GM13976 (cell line): ENCODE measurements at regions of chr9 and their contacts with region 1.

Region 1: DNA sequence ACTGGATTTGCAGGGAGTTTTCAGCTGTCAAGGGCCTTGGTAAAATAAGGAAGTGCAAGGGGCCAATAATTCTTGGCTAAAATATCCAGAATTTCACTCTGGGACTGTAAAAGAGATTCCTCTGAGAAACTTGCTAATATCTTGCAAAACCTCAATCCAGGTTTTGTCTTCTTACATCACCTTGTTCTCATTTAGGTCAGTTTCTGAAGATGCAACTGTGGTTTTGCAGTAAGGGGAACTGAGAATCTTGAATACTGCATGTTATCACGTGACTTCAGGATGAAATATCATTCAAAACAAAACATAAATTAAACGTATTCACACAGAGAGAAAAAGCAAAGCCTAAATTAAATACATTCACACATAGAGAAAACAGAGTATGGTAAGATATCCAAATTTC is 35.0 kb upstream of the RIC1 start:
- DNase-seq: peak; percentile 51
- CTCF ChIP-seq: no peak

Region 2: GRCh38 chr9:4297151-4297785 is 1296.6 kb before region 1 on chr9:
- in situ Hi-C with region 1: no loop called
- DNase-seq: peak; percentile 61
- CTCF ChIP-seq: peak; percentile 37

Region 3: DNA sequence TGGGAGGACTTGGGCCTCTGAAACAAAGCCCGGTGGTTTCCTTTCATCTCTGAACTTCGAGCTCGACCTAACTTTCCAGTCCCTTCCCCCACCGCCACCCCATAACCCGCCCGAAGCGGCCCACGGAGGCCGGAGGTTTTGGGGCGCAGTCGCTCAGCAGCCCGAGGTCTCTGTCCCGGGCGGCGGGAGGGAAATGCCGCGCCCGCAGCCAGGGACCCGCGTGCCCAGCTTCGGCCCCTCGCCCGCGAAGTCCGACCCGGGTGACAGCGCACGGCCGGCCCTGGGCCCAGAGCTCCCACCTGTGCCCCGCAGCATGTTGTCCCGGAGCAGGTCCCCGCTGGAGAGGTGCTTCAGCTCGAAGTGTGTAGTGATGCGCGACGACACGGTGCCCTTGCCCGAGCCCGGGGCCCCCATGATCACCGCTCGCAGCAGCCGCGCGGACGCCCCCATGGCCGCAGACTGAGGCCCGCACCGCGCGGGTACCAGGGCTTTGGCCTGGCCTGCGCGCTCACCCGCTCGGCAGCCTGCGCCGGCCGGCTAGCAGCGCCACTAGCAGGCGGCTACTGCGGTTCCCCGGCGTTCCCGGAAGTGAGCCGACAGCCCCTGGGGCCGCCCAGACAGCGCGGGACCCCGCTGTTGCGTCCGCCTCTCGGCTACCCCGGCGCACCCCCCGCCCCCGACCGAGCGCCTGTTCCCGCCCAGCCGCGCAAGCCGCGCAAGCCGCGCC is 853.1 kb before region 1 on chr9 and contains the start of gene AK3:
- in situ Hi-C with region 1: loop called (anchors 10 kb)
- DNase-seq: peak; percentile 98
- CTCF ChIP-seq: peak; percentile 42

Region 4: DNA sequence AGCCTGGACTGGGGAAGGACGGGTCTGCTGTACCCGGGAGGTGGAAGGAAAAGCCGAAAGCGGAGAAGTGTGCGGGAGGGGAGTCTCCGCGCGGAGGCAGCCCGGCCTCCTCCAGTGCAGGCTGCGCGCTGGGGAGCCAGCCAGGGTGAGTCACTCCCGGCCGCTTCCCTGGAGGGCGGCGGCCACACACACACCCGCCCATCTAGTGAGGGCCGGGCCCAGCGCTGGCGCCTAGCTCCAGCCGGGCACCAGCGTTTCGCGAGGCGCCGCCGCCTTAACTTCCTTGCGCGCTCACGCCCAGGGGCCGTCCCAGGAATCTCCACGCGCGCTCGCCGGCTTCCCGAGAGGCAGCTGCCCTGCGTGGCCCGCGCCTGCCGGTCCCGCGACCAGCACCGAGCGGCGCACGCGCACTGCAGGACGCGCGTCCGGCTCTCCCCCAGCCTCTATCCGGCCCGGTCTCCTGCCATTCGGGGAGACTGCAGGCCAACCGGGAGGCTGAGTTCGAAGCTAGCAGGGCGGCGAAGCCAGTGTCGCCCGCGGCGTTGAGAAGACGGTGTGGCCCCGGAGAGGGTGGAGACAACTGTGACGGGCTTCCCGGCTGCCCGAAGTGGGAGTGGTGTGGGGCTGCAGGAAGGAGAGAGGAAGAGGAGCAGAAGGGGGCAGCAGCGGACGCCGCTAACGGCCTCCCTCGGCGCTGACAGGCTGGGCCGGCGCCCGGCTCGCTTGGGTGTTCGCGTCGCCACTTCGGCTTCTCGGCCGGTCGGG is 609.1 kb before region 1 on chr9 and contains the start of gene JAK2:
- in situ Hi-C with region 1: loop called (anchors 10 kb)
- DNase-seq: peak; percentile 82
- CTCF ChIP-seq: peak; percentile 57

Region 5: GRCh38 chr9:5178126-5178805 is 415.6 kb before region 1 on chr9:
- in situ Hi-C with region 1: loop called (anchors 10 kb)
- DNase-seq: no peak
- CTCF ChIP-seq: no peak

Region 6: DNA sequence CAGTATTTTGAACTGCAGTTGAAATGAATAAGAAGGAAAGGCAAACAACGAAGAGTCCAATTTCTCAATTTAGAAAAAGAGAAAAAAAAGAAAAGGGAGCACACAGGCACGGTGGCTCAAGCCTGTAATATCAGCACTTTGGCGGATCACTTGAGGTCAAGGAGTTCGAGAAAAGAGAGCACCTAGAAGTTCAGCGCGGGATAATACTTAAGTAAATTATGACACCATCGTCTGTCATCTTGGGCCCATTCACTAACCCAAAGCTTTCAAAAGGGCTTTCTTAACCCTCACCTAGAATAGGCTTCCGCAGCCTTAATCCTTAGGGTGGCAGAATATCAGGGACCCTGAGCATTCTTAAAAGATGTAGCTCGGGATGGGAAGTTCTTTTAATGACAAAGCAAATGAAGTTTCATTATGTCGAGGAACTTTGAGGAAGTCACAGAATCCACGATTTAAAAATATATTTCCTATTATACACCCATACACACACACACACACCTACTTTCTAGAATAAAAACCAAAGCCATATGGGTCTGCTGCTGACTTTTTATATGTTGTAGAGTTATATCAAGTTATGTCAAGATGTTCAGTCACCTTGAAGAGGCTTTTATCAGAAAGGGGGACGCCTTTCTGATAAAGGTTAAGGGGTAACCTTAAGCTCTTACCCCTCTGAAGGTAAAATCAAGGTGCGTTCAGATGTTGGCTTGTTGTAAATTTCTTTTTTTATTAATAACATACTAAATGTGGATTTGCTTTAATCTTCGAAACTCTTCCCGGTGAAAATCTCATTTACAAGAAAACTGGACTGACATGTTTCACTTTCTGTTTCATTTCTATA is 144.2 kb before region 1 on chr9:
- in situ Hi-C with region 1: loop called (anchors 5 kb)
- DNase-seq: no peak
- CTCF ChIP-seq: no peak